Esophagus squamous epithelium (tissue), 5 donors: ENCODE measurements at regions of chr11 and their contacts with region 1.

Region 1: DNA sequence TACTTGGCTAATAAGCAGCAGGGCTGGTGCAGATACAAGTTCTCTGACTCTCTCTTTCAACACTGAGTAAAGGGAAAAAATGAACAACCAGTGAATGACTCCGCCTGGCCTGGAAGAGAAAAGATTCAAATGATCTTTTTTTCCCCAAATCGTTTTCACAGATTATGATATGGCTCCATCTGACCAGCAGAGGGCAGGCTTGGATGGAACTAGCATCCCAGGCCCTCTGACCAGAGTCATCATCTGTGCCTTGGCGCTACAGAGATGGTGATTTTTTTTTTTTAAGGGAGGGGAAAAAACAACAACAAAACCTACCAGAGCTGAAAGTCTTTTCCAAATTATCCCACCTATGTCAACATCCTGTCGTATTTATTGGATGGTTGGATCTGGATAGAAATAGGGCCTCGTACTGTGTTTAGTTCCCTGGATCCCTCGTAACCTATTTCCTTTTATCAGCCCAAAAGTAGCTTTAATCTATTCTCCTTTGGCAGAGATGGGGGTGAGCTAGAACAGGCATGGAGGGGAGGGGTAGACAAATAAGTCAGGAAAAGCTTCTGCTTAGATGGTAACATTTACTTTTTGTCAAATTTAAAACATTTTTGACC is 69.7 kb downstream of the PRSS23 start:
- DNase-seq: no peak
- H3K4me3 ChIP-seq: no peak overlapping the region
- H3K27ac ChIP-seq: no peak overlapping the region
- H3K4me1 ChIP-seq: no peaks in the 10 kb centered on the region
- H3K27me3 ChIP-seq: no peaks in the 10 kb centered on the region
- CTCF ChIP-seq: peak; percentile 33 to 77 (median 62)
- POLR2A ChIP-seq: no peak

Region 2: DNA sequence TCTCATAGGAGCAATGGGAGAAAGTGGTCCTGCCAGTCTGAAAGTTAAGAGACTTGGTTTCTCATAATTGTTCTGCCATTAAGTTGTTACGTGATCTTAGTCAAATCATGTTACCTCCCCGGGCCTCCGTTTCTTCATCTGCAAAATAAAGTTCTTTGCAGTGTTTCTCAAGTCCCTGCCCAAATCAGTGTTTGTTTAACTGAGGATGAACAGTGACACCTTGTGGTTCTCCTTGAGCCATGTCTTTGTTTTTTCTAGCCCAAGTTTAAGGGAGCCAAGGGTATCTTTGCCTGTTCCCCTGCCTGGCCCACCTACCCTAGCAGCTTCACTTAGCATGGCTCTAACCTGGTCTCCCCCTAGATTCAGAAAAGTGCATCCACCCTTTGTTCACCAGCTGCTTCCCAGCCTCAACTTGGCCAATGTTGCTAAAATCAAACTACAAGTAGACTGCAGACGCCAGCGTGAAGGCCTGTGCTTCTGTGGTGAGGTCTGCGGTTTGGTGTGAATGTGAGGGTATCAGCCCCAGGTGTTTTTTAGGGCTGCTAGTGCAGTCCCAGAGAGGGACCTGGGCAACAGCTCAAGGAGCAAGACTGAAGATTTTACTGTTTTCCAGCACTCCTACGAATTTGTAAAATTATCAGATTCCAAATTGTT is 49.6 kb after region 1 on chr11:
- intact Hi-C with region 1: loop called (anchors 5 kb)
- DNase-seq: no peak
- H3K4me3 ChIP-seq: no peak overlapping the region
- H3K27ac ChIP-seq: peak overlapping the region in 3 of 4 donors; percentile 11 to 52 (median 51)
- H3K4me1 ChIP-seq: peaks cover 8 to 35% (median 14%) of the 10 kb centered on the region in 3 donors
- H3K27me3 ChIP-seq: no peaks in the 10 kb centered on the region
- CTCF ChIP-seq: peak in 5 of 6 experiments; percentile 54 to 78 (median 61)
- POLR2A ChIP-seq: no peak

Region 3: DNA sequence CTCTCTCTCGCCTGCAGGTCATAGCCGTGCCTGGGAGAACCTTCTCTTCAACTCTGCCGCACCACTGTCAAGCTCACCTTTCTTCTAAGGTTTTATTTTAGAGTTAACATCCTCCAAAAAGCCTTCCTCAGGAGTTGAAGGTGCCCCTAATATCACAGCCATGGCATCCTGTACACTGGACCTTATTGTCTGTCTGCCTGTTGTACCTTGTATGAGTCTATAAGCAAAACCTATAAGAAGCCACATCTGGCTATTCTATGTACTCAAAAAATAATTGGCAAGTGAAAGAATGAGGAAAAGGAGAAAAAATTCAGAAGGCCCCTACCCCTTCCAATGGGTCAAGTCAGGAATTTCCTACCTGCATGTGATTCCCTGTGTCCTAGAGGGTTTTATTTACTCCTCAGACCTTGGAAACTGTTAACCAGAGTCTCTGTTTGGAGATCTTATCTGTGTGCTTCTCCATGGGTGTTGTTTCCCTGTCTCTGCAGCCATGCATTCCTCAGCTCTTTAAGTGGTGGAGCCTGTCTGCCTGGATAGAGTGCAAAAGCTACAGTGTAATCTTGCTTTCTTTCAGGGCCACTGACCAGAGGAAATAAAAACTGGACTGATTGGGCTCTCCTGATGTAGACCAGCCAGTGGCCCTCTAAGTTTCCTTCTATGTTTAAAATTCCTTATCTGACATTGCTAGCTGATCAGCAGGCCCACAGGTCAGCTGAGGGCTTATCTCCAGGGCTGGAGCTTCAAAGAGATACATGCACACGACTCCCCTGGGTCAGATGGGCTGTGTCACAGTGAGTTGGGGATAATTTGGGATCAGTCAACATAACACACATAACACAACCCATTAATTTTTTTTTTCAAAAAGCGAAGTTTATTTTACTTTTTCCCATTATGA is 130.0 kb after region 1 on chr11:
- intact Hi-C with region 1: no loop called
- DNase-seq: no peak
- H3K4me3 ChIP-seq: no peak overlapping the region
- H3K27ac ChIP-seq: no peak overlapping the region
- H3K4me1 ChIP-seq: peaks cover 0 to 4% (median 0%) of the 10 kb centered on the region in 3 donors
- H3K27me3 ChIP-seq: no peaks in the 10 kb centered on the region
- CTCF ChIP-seq: no peak
- POLR2A ChIP-seq: no peak

Region 4: GRCh38 chr11:87290304-87290922 is 420.3 kb after region 1 on chr11:
- intact Hi-C with region 1: loop called (anchors 10 kb)
- DNase-seq: no peak
- H3K4me3 ChIP-seq: no peak overlapping the region
- H3K27ac ChIP-seq: no peak overlapping the region
- H3K4me1 ChIP-seq: no peaks in the 10 kb centered on the region
- H3K27me3 ChIP-seq: no peaks in the 10 kb centered on the region
- CTCF ChIP-seq: peak; percentile 17 to 70 (median 58)
- POLR2A ChIP-seq: no peak